Tibial artery (tissue), 4 donors: ENCODE measurements at regions of chr10 and their contacts with region 1.

Region 1: GRCh38 chr10:15960277-15960676 is 100.0 kb upstream of the MINDY3 start:
- DNase-seq: no peak
- H3K4me3 ChIP-seq: no peak overlapping the region
- H3K27ac ChIP-seq: no peak overlapping the region
- H3K4me1 ChIP-seq: no peaks in the 10 kb centered on the region
- H3K27me3 ChIP-seq: no peaks in the 10 kb centered on the region
- CTCF ChIP-seq: no peak

Region 2: GRCh38 chr10:15027741-15028140 is 932.5 kb before region 1 on chr10:
- intact Hi-C with region 1: loop called (anchors 10 kb)
- DNase-seq: no peak
- H3K4me3 ChIP-seq: no peak overlapping the region
- H3K27ac ChIP-seq: no peak overlapping the region
- H3K4me1 ChIP-seq: peaks cover 0 to 3% (median 0%) of the 10 kb centered on the region in 4 donors
- H3K27me3 ChIP-seq: no peaks in the 10 kb centered on the region
- CTCF ChIP-seq: no peak